Cardiac septum (tissue), 1 donor: ENCODE measurements at regions of chr10 and their contacts with region 1.

Region 1: DNA sequence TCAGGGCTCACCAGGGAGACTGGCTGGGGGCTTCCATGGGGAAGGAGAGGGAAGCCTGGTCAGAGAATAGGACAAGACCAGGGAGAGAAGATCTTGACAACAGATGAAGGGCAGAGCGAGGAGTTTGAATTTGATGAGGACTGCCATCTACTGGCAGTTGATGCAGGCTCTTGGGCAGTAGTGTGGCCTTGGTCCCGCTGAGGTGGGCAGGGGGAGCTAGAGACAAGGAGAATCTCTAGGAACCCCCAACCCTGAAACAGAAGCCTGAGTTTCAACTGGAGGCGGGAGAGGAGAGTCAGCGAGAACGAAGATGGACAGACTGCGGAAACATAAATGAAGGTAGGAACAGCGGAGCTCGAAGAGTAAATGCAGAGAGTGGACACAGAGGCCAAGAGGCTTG is 81.0 kb downstream of the PPP1R3C start:
- DNase-seq: no peak

Region 2: DNA sequence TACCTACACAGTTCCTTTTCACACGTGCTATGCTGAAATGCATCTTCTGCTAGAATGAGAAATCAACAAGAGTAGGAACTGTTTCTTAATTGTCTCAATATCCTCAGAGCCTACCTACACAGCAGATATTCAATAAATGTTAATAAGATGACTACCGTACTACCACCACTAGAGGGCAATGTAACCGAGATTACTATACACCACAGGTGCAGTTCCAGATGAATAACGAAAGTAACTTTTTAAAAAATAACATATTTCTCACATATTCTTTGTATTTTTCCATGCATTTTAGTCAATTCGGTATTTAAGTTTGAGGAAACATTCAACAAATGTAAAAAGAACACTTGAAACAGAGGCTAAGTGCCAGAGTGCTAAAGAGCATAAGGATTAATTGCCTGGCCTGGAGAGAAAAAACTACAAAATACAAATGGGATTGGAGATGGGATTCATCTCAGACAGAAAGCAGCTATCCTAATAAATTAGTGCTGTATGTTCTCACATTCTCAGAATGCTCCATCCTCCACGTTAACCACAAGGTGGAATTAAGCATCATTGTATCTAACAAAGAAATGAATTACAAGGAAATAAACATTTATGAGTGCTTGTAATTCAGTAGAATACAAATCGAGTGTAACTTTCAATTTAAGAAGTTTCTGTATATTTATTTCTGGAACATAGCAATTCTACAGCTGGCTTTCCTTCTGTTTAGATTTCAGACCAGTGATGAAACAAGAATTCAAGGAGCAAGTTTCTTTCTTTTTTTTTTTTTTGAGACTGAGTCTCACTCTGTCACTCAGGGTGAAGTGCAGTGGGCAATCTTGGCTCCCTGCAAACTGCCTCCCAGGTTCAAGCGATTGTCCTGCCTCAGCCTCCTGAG is 162.0 kb before region 1 on chr10:
- intact Hi-C with region 1: loop called (anchors 5 kb)
- DNase-seq: no peak

Region 3: GRCh38 chr10:91493313-91493712 is 58.5 kb before region 1 on chr10:
- intact Hi-C with region 1: loop called (anchors 2 kb)
- DNase-seq: no peak

Region 4: GRCh38 chr10:91694170-91694794 is 142.4 kb after region 1 on chr10:
- intact Hi-C with region 1: loop called (anchors 5 kb)
- DNase-seq: no peak

Region 5: DNA sequence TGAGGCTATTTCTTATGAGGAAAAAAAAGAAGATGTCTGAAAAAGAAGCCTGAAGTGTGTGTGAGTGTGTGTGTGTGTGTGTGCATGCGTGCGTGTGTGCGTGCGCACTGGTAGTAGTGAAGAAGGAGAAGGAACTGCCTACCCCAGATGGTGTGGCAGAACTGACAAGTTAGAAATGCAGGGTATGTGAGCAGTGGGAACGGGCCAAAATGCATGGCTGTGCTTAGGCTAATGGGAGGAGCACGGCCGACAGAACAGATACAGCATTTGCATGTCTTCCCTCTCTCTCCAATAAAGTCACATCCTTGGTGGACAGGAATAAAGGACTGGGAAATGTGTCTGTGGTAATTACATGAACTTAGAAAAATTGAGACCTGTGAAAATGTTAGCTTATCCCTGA is 927.7 kb after region 1 on chr10:
- intact Hi-C with region 1: no loop called
- DNase-seq: no peak